ENCODE measurements at regions of chr1 and their contacts with region 1.

Region 1: GRCh38 chr1:191261111-191261510 is 783.4 kb upstream of the BRINP3 start:
- DNase-seq: no peak
- ATAC-seq: no peak
- H3K4me3 ChIP-seq: no peak overlapping the region
- H3K27ac ChIP-seq: no peak overlapping the region
- H3K4me1 ChIP-seq: no peaks in the 10 kb centered on the region
- H3K27me3 ChIP-seq: no peaks in the 10 kb centered on the region
- CTCF ChIP-seq: no peak

Region 2: GRCh38 chr1:190453550-190453949 is 807.6 kb before region 1 on chr1:
- CTCF ChIA-PET with region 1: no interaction called
- POLR2A ChIA-PET with region 1: no interaction called
- in situ Hi-C with region 1: no loop called
- intact Hi-C with region 1: loop called (anchors 5 kb)
- DNase-seq: no peak
- ATAC-seq: no peak
- H3K4me3 ChIP-seq: no peak overlapping the region
- H3K27ac ChIP-seq: no peak overlapping the region
- H3K4me1 ChIP-seq: no peaks in the 10 kb centered on the region
- H3K27me3 ChIP-seq: no peaks in the 10 kb centered on the region
- CTCF ChIP-seq: peak; percentile 28; the same call in 1 of the 2 replicates

Region 3: DNA sequence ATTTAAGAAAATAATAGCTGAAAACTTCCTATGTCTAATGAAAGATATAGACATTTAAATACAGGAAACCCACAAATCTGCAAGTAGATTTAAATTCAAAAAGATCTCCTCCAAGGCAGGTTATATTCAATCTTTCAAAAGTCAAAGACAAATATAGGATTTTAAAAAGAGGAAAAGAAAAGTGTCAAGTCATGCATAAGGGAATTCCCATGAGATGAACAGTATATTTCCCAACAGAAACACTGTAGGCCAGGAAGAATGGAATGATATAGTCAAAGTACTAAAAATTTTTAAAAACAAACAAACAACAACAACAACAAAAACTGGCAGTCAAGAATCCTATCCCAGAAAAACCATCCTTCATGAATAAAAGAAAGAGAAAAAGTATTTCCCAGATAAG is 23.1 kb after region 1 on chr1:
- CTCF ChIA-PET with region 1: no interaction called
- POLR2A ChIA-PET with region 1: no interaction called
- in situ Hi-C with region 1: no loop called
- intact Hi-C with region 1: no loop called
- DNase-seq: no peak
- ATAC-seq: no peak
- H3K4me3 ChIP-seq: no peak overlapping the region
- H3K27ac ChIP-seq: no peak overlapping the region
- H3K4me1 ChIP-seq: no peaks in the 10 kb centered on the region
- H3K27me3 ChIP-seq: no peaks in the 10 kb centered on the region
- CTCF ChIP-seq: no peak

Measured in Panc1 (cell line).